Heart right ventricle (tissue), 16 donors: ENCODE measurements at regions of chr4 and their contacts with region 1.

Region 1: GRCh38 chr4:128787509-128788311 is 21.8 kb upstream of the JADE1 start:
- DNase-seq: no peak
- ATAC-seq: peak in 2 of 8 donors; percentile 26 to 53
- H3K4me3 ChIP-seq: no peak overlapping the region
- H3K27ac ChIP-seq: no peak overlapping the region
- H3K4me1 ChIP-seq: no peaks in the 10 kb centered on the region
- H3K27me3 ChIP-seq: no peaks in the 10 kb centered on the region
- CTCF ChIP-seq: no peak

Region 2: DNA sequence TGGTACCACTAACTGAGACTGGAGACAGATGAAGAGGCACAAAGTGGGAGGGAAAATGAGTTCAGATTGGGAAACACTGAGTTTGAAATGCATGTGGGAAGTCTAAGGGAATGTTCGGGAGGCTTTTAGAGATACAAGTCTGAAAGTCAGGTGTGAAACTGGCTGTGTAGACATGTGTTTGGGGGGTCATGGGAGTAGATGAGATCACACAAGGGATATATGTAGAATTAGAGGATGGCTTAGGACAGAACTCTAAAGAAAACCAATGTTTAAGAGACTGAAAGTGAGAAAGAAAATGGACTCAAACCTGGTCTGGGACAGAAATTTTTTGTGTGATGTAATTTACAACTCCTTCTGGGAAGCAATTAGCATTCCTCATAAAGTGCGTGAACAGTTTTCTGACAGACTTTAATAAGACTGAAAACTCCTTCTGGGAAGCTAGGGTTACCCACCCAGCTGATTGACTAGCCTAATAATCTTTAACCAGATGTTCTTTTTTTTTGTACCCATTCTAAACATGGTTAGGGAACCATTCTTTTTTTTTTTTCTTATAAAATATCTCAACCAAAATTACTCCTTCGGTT is 13.1 kb after region 1 on chr4:
- intact Hi-C with region 1: loop called in 1 of 10 experiments (anchors 2 kb)
- DNase-seq: no peak
- ATAC-seq: no peak
- H3K4me3 ChIP-seq: no peak overlapping the region
- H3K27ac ChIP-seq: no peak overlapping the region
- H3K4me1 ChIP-seq: no peaks in the 10 kb centered on the region
- H3K27me3 ChIP-seq: no peaks in the 10 kb centered on the region
- CTCF ChIP-seq: no peak